ENCODE measurements at regions of chr5 and their contacts with region 1.

Region 1: DNA sequence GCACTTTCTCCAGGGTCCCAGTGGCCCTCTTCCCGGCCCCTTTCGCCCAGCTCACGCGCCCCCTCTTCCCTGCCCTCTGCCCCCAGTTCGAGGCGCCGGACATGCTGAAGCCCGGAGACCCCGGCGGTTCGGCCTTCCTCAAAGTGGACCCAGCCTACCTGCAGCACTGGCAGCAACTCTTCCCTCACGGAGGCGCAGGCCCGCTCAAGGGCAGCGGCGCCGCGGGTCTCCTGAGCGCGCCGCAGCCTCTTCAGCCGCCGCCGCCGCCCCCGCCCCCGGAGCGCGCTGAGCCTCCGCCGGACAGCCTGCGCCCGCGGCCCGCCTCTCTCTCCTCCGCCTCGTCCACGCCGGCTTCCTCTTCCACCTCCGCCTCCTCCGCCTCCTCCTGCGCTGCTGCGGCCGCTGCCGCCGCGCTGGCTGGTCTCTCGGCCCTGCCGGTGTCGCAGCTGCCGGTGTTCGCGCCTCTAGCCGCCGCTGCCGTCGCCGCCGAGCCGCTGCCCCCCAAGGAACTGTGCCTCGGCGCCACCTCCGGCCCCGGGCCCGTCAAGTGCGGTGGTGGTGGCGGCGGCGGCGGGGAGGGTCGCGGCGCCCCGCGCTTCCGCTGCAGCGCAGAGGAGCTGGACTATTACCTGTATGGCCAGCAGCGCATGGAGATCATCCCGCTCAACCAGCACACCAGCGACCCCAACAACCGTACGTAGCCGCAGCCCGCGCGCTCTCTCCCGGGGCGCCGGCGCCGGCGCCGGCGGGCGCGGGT is 1.1 kb downstream of the PRDM6 start:
- DNase-seq: peak in 1 of 5 donors; percentile 68
- ATAC-seq: peak; percentile 36 to 69 (median 58)
- H3K4me3 ChIP-seq: peak overlapping the region; percentile 51 to 70 (median 58)
- H3K27ac ChIP-seq: peak overlapping the region in 1 of 12 donors; percentile 76
- H3K4me1 ChIP-seq: peaks cover 0 to 46% (median 24%) of the 10 kb centered on the region in 12 donors
- H3K27me3 ChIP-seq: peaks cover 44 to 98% (median 75%) of the 10 kb centered on the region in 9 donors
- CTCF ChIP-seq: no peak
- POLR2A ChIP-seq: no peak

Region 2: GRCh38 chr5:122907238-122907637 is 182.9 kb before region 1 on chr5:
- intact Hi-C with region 1: loop called in 1 of 10 experiments (anchors 5 kb)
- DNase-seq: no peak
- ATAC-seq: peak in 1 of 4 donors; percentile 80
- H3K4me3 ChIP-seq: no peak overlapping the region
- H3K27ac ChIP-seq: no peak overlapping the region
- H3K4me1 ChIP-seq: peaks cover 0 to 20% (median 6%) of the 10 kb centered on the region in 12 donors
- H3K27me3 ChIP-seq: no peaks in the 10 kb centered on the region
- CTCF ChIP-seq: no peak
- POLR2A ChIP-seq: no peak

Measured in heart left ventricle (tissue), 16 donors.